Astrocyte of the cerebellum (primary cell): ENCODE measurements at regions of chr4 and their contacts with region 1.

Region 1: GRCh38 chr4:157978680-157979361 is 194.0 kb downstream of the GASK1B start:
- DNase-seq: peak; percentile 60
- H3K4me3 ChIP-seq: no peak overlapping the region
- CTCF ChIP-seq: peak; percentile 79

Region 2: GRCh38 chr4:157226035-157226434 is 752.8 kb before region 1 on chr4:
- in situ Hi-C with region 1: loop called (anchors 5 kb)
- DNase-seq: no peak
- H3K4me3 ChIP-seq: no peak overlapping the region
- CTCF ChIP-seq: no peak